GM12878 (cell line): ENCODE measurements at regions of chr7 and their contacts with region 1.

Region 1: GRCh38 chr7:55280031-55280454 is 85.1 kb upstream of the LANCL2 start:
- DNase-seq: no peak
- ATAC-seq: peak; percentile 96
- H3K4me3 ChIP-seq: no peak overlapping the region
- H3K27ac ChIP-seq: no peak overlapping the region
- H3K4me1 ChIP-seq: no peaks in the 10 kb centered on the region
- H3K27me3 ChIP-seq: 0 out of 4 replicates have a peak, but pooled peaks cover 0 to 2% of the 10 kb centered on the region in 2 experiments
- CTCF ChIP-seq: peak; percentile 51 to 95 (median 68); a peak in 4 of 6 replicates
- EP300 ChIP-seq: no peak
- POLR2A ChIP-seq: no peak
- RAD21 ChIP-seq: peak; percentile 97

Region 2: DNA sequence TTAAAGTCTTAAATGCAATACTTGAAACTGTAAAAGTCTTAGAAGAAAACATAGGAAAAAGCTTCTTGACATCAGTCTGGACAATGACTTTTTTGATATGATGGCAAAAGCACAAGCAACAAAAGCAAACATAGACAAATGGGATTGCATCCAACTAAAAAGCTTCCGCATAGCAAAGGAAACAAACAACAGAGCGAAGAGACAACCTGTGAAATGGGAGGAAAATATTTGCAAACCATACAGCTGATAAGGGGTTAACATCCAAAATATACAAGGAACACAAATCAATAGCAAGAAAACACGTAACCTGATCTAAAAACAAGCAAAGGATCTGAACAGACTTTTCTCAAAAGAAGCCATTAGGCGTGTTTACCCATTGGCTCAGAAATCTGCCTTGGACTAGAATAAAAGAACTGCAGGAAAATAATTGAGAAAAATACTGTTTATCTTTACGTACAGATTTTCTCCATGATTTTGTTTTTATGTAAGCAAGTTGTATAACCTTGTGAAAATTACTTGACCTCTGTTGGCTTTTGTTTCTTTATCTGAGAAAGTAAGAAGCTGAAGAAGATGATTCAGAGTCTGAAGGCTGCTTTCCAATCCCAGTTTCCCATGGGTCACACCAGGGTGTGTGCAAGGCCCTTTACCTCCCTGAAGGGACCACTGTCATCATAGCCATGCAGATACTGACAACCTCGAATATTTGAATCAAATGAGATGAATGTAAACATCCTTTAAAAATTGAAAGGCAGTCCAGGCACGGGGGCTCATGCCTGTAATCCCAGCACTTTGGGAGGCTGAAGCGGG is 14.0 kb before region 1 on chr7:
- CTCF ChIA-PET with region 1: no interaction called
- POLR2A ChIA-PET with region 1: no interaction called
- RAD21 ChIA-PET with region 1: no interaction called
- SMC1A ChIA-PET with region 1: no interaction called
- in situ Hi-C with region 1: no loop called
- intact Hi-C with region 1: no loop called
- DNase-seq: no peak
- ATAC-seq: no peak
- H3K4me3 ChIP-seq: no peak overlapping the region
- H3K27ac ChIP-seq: no peak overlapping the region
- H3K4me1 ChIP-seq: no peaks in the 10 kb centered on the region
- H3K27me3 ChIP-seq: no peaks in the 10 kb centered on the region
- CTCF ChIP-seq: no peak
- EP300 ChIP-seq: no peak
- POLR2A ChIP-seq: no peak
- RAD21 ChIP-seq: no peak

Region 3: GRCh38 chr7:55365675-55366460 is 85.8 kb after region 1 on chr7:
- CTCF ChIA-PET with region 1: interaction called, 15 read pairs
- POLR2A ChIA-PET with region 1: interaction called, 3 read pairs
- RAD21 ChIA-PET with region 1: interaction called, 12 read pairs
- SMC1A ChIA-PET with region 1: interaction called, 15 read pairs
- in situ Hi-C with region 1: no loop called
- intact Hi-C with region 1: loop called (anchors 2 kb)
- DNase-seq: peak; percentile 79
- ATAC-seq: peak; percentile 90
- H3K4me3 ChIP-seq: peak overlapping the region; percentile 99
- H3K27ac ChIP-seq: peak overlapping the region; percentile 91
- H3K4me1 ChIP-seq: peaks cover 9% of the 10 kb centered on the region
- H3K27me3 ChIP-seq: no peaks in the 10 kb centered on the region
- CTCF ChIP-seq: peak in 2 of 3 experiments; percentile 30 to 32; a peak in 3 of 6 replicates
- EP300 ChIP-seq: peak in 1 of 2 experiments; percentile 22; a peak in 1 of 4 replicates
- POLR2A ChIP-seq: peak; percentile 93
- RAD21 ChIP-seq: peak; percentile 31; the same call in 1 of the 2 replicates

Region 4: DNA sequence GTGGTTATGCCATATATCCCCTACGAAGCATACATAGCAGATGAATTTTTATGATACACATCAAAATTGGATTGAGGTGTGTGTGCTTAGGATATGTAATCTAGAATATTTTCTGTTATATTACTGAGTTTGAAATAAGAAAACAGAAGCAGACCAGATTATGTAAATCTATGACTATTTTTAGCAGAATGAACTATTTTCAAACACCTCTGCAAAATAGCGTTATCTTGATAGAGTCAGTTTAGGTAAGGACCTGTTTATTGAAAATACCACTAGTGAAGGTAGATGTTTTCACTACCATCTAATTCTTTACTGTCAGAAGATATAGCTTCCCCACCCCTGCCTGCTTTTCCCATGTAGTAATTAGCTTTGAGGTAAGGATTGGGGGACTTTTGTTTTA is 94.2 kb after region 1 on chr7:
- CTCF ChIA-PET with region 1: interaction called, 12 read pairs
- POLR2A ChIA-PET with region 1: no interaction called
- RAD21 ChIA-PET with region 1: no interaction called
- SMC1A ChIA-PET with region 1: interaction called, 15 read pairs
- in situ Hi-C with region 1: no loop called
- intact Hi-C with region 1: loop called (anchors 2 kb)
- DNase-seq: no peak
- ATAC-seq: no peak; the same call in 2 of the 3 replicates
- H3K4me3 ChIP-seq: no peak overlapping the region
- H3K27ac ChIP-seq: peak overlapping the region; percentile 25; the same call in 1 of the 2 replicates
- H3K4me1 ChIP-seq: peaks cover 12% of the 10 kb centered on the region
- H3K27me3 ChIP-seq: no peaks in the 10 kb centered on the region
- CTCF ChIP-seq: no peak
- EP300 ChIP-seq: no peak
- POLR2A ChIP-seq: no peak
- RAD21 ChIP-seq: no peak

Region 5: GRCh38 chr7:55409482-55410225 is 129.6 kb after region 1 on chr7:
- CTCF ChIA-PET with region 1: interaction called, 322 read pairs
- POLR2A ChIA-PET with region 1: no interaction called
- RAD21 ChIA-PET with region 1: interaction called, 68 read pairs
- SMC1A ChIA-PET with region 1: interaction called, 140 read pairs
- in situ Hi-C with region 1: no loop called
- intact Hi-C with region 1: no loop called
- DNase-seq: peak; percentile 1
- ATAC-seq: peak; percentile 78
- H3K4me3 ChIP-seq: no peak overlapping the region
- H3K27ac ChIP-seq: no peak overlapping the region
- H3K4me1 ChIP-seq: no peaks in the 10 kb centered on the region
- H3K27me3 ChIP-seq: no peaks in the 10 kb centered on the region
- CTCF ChIP-seq: 0 out of 6 replicates have a peak, but pooled peaks of 1 of the 3 experiments have one; percentile 3
- EP300 ChIP-seq: no peak
- POLR2A ChIP-seq: no peak
- RAD21 ChIP-seq: no peak

Region 6: GRCh38 chr7:55415173-55415778 is 135.2 kb after region 1 on chr7:
- CTCF ChIA-PET with region 1: interaction called, 322 read pairs
- POLR2A ChIA-PET with region 1: interaction called, 4 read pairs
- RAD21 ChIA-PET with region 1: interaction called, 68 read pairs
- SMC1A ChIA-PET with region 1: interaction called, 140 read pairs
- in situ Hi-C with region 1: loop called (anchors 5 kb)
- intact Hi-C with region 1: loop called (anchors 1 kb)
- DNase-seq: peak; percentile 25
- ATAC-seq: peak; percentile 99
- H3K4me3 ChIP-seq: no peak overlapping the region
- H3K27ac ChIP-seq: no peak overlapping the region
- H3K4me1 ChIP-seq: no peaks in the 10 kb centered on the region
- H3K27me3 ChIP-seq: no peaks in the 10 kb centered on the region
- CTCF ChIP-seq: peak; percentile 64 to 76 (median 65)
- EP300 ChIP-seq: no peak
- POLR2A ChIP-seq: no peak
- RAD21 ChIP-seq: peak; percentile 85

Region 7: DNA sequence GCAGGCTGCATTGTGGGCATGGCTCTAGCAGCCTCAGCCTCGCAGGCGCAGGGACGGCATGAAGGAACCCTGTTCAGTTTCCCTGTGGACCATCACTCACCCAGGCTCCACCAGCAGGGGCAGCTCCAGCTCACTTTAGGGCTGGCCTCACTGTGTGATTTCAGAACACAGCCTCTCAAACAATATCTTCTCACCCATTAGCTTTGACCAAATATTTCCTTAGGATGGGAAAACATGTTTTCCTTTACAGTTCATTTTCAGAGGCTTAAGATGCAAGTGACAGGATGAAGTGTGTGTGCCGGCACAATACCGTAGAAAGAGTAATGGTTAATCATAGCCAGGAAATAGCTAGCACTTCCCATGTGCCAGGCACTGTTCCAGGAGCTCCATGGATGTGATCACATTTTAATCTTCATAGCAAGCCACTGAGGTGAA is 143.3 kb after region 1 on chr7:
- CTCF ChIA-PET with region 1: interaction called, 322 read pairs
- POLR2A ChIA-PET with region 1: no interaction called
- RAD21 ChIA-PET with region 1: interaction called, 3 read pairs
- SMC1A ChIA-PET with region 1: interaction called, 140 read pairs
- in situ Hi-C with region 1: loop called (anchors 5 kb)
- intact Hi-C with region 1: no loop called
- DNase-seq: no peak
- ATAC-seq: no peak
- H3K4me3 ChIP-seq: no peak overlapping the region
- H3K27ac ChIP-seq: no peak overlapping the region
- H3K4me1 ChIP-seq: no peaks in the 10 kb centered on the region
- H3K27me3 ChIP-seq: no peaks in the 10 kb centered on the region
- CTCF ChIP-seq: 0 out of 6 replicates have a peak, but pooled peaks of 1 of the 3 experiments have one; percentile 2
- EP300 ChIP-seq: no peak
- POLR2A ChIP-seq: no peak
- RAD21 ChIP-seq: no peak

Region 8: DNA sequence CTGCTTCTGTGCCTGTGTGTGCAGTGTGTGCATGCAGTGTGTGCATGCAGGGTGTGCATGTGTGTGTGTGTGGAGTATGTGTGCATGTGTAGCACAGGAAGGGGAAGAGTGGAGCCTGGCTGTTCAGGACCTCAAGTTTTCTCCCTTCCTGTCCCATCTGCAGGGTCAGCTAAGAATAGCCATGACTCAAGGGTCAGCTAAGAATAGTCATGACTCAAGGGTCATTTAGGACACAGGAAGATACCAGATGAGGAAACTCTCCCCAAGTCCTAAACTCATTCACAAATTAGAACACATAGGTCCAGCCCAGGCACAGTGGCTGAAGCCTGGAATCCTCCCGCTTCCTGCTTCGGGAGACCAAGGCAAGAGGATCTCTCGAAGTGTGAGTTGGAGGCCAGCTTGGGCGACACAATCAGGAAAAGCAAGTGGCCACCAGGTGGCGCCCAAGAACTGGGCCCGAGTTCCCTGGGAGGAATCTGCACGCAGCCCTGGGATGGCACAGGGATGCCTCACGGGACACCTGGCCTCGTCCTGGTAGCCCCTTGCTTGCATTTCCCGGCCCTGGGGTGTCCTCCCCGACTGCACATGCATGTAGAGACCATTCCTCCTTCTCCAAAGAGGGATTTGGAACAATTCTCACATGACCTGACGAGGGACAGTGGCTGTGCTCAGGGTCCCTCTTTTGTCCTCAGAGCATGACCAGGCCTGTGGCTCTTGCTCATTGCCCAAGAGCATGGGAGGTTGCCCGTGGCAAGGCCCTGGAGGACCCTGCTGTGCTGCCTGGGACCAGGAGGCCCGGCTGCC is 313.7 kb after region 1 on chr7:
- CTCF ChIA-PET with region 1: interaction called, 7 read pairs
- POLR2A ChIA-PET with region 1: no interaction called
- RAD21 ChIA-PET with region 1: interaction called, 6 read pairs
- SMC1A ChIA-PET with region 1: interaction called, 3 read pairs
- in situ Hi-C with region 1: loop called (anchors 25 kb)
- intact Hi-C with region 1: loop called (anchors 5 kb)
- DNase-seq: no peak
- ATAC-seq: peak; percentile 84
- H3K4me3 ChIP-seq: no peak overlapping the region
- H3K27ac ChIP-seq: no peak overlapping the region
- H3K4me1 ChIP-seq: peaks cover 9% of the 10 kb centered on the region; the same call in 1 of the 2 replicates
- H3K27me3 ChIP-seq: no peaks in the 10 kb centered on the region
- CTCF ChIP-seq: peak; percentile 73 to 94 (median 90)
- EP300 ChIP-seq: no peak
- POLR2A ChIP-seq: no peak
- RAD21 ChIP-seq: peak; percentile 54